Colonic mucosa (tissue), 4 donors: ENCODE measurements at regions of chr7 and their contacts with region 1.

Region 1: DNA sequence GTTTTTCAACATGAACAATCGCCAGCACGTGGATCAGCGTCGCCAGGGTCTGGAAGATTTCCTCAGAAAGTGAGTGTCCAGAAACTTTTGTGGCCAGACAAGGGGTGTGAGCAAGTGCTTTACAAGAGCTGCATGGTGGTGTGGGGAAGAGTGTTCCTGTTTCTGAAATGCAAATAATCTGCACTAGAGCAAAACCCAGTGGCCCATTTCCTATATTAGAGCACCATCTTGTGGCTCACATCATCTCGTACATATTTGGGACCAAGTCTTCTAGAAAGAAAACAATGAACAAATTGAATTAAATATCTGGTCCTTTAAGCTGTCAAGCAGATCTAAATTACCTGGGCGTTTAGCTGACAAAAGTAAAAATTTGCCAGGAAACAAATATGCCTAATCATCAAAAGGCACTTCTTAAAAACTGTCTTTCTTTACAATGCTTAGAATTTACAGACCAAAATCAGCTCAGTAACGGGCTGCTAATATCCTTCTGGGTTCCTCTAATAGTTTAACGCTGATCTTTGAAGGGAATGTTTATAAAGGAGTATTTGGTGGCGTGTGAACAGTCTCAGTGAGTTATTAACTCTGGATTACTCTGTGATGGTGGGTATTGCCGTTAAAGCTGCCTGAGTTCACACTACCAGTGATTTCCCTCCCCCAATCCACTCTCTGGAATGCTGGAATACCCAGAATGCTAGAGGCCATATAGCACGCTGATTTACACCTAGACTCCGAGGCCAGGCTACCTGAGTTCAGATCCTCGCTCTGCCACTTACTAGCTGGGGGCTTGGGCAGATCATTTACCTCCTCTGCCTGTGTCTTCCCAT is 73.6 kb downstream of the SNX10 start:
- DNase-seq: peak; percentile 65
- H3K4me3 ChIP-seq: no peak overlapping the region
- H3K27ac ChIP-seq: no peak overlapping the region
- H3K4me1 ChIP-seq: no peaks in the 10 kb centered on the region
- H3K27me3 ChIP-seq: no peaks in the 10 kb centered on the region
- CTCF ChIP-seq: peak; percentile 60

Region 2: DNA sequence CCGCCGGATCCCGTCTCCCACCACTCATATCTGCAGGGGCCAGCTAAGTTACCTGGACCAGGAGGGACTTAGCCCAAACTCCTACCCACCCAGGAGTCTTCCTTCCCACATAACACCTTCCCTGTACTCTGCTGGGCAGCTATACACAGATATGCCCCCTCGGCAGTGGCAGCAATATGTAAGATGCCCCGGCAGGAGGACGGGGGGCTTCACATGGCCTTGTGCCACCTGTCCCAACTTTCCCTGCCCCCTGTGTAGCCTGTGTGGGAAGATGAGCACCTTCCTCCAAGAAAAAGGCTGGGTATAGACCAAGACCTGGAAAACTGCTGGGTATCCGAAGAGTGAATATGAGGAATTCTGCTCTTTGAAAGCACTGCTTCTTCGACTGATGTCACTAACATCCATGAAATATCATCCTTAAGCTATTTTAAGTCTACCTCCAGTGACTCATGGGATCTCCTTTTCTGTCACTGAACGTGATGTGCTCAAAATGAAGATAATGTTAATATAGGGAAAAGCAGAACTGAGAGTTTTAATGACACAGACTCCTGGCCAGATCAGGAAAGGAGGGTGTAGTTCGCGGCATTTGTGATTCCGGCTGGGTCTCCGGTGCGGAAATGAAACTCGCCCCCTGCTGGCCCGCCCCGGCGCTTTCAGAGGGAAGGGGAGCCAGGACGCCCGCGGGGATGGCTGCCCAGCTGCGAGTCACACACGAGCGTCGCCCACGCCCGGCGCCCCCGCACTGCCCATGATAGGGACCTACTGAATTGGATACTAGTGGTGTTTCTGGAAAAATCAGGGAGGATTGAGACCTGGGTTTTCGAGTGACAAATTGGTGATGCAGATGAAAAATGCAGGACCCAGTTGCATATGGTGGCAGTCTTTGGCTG is 470.1 kb before region 1 on chr7:
- intact Hi-C with region 1: loop called (anchors 5 kb)
- DNase-seq: peak; percentile 83
- H3K4me3 ChIP-seq: no peak overlapping the region
- H3K27ac ChIP-seq: no peak overlapping the region
- H3K4me1 ChIP-seq: no peaks in the 10 kb centered on the region
- H3K27me3 ChIP-seq: no peaks in the 10 kb centered on the region
- CTCF ChIP-seq: peak; percentile 64

Region 3: GRCh38 chr7:26090927-26091519 is 274.3 kb before region 1 on chr7:
- intact Hi-C with region 1: loop called (anchors 5 kb)
- DNase-seq: no peak
- H3K4me3 ChIP-seq: no peak overlapping the region
- H3K27ac ChIP-seq: no peak overlapping the region
- H3K4me1 ChIP-seq: peaks cover 5% of the 10 kb centered on the region
- H3K27me3 ChIP-seq: no peaks in the 10 kb centered on the region
- CTCF ChIP-seq: peak; percentile 47

Region 4: DNA sequence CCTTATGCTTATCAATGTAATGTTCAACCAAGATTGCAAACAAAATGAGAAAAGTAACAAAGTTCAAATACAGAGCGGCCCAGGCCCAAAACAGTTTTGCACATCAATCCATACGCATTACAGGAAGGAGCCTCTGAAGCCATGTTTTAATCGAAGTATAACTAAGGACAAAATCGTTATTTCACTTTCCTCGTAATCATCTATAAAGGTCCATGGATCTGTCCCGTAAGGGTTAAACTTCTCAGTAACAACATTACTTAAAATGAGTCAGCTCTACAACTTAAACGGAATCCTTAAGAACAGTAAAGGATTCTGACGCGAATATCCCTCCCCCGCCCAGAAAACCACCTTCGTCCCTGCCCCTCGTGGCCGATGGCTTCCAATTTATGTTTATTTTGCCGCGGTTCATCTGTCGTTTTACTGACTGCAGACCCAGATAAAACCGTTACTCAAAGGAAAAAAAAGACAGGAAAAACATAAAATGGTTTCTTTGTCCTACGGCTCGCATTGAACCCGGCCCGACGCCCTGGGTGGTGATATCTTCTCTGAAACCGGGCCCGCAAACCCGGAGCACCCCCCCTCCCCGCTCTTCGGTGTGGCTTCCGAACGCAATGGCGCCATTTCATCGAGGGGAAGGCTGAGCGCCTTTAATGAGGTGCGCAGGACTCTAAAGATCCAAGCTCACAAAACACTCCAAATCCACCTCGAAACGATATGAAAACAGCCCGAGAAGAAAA is 165.8 kb before region 1 on chr7:
- intact Hi-C with region 1: loop called (anchors 10 kb)
- DNase-seq: peak; percentile 67
- H3K4me3 ChIP-seq: peak overlapping the region; percentile 90
- H3K27ac ChIP-seq: peak overlapping the region; percentile 100
- H3K4me1 ChIP-seq: peaks cover 15% of the 10 kb centered on the region
- H3K27me3 ChIP-seq: no peaks in the 10 kb centered on the region
- CTCF ChIP-seq: no peak

Region 5: DNA sequence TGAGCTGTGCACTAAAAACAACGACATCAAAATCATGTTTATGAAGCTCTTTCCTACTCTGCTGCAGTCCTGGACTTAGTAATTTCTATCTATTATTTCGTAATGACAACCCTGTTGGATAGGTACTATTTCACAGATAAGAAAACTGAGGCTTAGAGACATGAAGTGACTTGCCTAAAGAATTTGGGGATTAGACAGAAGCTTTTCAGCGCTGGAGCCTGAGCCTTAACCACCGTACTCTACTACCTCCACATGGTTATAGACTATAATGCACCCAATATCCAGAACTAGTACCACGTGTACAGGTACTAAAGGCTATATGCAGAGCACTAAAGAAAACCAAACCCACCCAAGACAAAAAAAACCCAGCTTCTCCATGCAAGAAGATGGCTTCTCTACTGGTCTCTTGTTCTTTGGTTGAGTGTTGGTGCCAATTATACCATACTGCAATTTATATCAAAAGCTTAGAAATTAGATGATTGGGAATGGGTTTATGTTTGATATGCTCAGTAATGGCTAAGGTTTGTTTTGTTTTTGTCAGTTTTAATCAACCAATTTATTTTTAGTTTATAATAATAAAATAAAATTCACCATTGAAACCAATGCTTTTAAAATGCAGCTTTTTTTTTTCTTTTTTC is 80.2 kb before region 1 on chr7:
- intact Hi-C with region 1: loop called (anchors 10 kb)
- DNase-seq: no peak
- H3K4me3 ChIP-seq: no peak overlapping the region
- H3K27ac ChIP-seq: no peak overlapping the region
- H3K4me1 ChIP-seq: no peaks in the 10 kb centered on the region
- H3K27me3 ChIP-seq: no peaks in the 10 kb centered on the region
- CTCF ChIP-seq: no peak

Region 6: GRCh38 chr7:27160546-27161213 is 795.4 kb after region 1 on chr7:
- intact Hi-C with region 1: loop called (anchors 5 kb)
- DNase-seq: peak; percentile 91
- H3K4me3 ChIP-seq: peak overlapping the region; percentile 64
- H3K27ac ChIP-seq: peak overlapping the region; percentile 94
- H3K4me1 ChIP-seq: peaks cover 5% of the 10 kb centered on the region
- H3K27me3 ChIP-seq: peaks cover 4% of the 10 kb centered on the region
- CTCF ChIP-seq: peak; percentile 99